PC-9 (cell line): ENCODE measurements at regions of chr11 and their contacts with region 1.

Region 1: GRCh38 chr11:77198440-77198849 is 70.4 kb downstream of the MYO7A start:
- DNase-seq: no peak
- H3K4me3 ChIP-seq: no peak overlapping the region
- H3K27ac ChIP-seq: no peak overlapping the region
- H3K4me1 ChIP-seq: no peaks in the 10 kb centered on the region
- H3K27me3 ChIP-seq: no peaks in the 10 kb centered on the region
- CTCF ChIP-seq: peak; percentile 60

Region 2: GRCh38 chr11:77170107-77170506 is 28.3 kb before region 1 on chr11:
- CTCF ChIA-PET with region 1: no interaction called
- POLR2A ChIA-PET with region 1: no interaction called
- intact Hi-C with region 1: no loop called
- DNase-seq: peak; percentile 73 to 82
- H3K4me3 ChIP-seq: no peak overlapping the region
- H3K27ac ChIP-seq: no peak overlapping the region
- H3K4me1 ChIP-seq: peaks cover 8% of the 10 kb centered on the region; the same call in 1 of the 2 replicates
- H3K27me3 ChIP-seq: peaks cover 26% of the 10 kb centered on the region; the same call in 1 of the 2 replicates
- CTCF ChIP-seq: no peak

Region 3: GRCh38 chr11:77287615-77288273 is 89.3 kb after region 1 on chr11:
- CTCF ChIA-PET with region 1: no interaction called
- POLR2A ChIA-PET with region 1: no interaction called
- intact Hi-C with region 1: no loop called
- DNase-seq: peak; percentile 12 to 58
- H3K4me3 ChIP-seq: no peak overlapping the region
- H3K27ac ChIP-seq: no peak overlapping the region
- H3K4me1 ChIP-seq: peaks cover 8% of the 10 kb centered on the region; the same call in 1 of the 2 replicates
- H3K27me3 ChIP-seq: no peaks in the 10 kb centered on the region
- CTCF ChIP-seq: no peak

Region 4: DNA sequence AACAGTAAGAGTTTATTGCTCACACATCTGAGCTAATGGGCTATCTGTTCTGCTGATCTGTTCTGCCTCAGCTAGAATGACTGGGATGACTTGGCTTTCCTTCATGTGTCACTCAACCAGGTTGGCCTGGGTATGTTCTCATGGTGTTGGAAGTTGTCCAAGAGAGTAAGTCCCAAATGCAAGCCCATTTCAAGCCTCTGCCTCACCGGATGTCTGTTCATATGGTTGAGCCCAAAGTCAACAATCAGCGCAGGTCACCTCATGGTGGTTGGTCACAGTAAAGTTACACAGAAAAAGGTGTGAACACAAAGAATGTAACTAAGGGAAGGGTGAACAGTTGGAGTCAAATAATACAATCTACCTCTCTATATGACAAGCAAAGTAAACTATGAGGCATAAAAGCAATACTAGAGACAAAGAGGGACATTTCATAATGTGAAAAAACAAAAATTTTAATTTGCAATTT is 101.1 kb after region 1 on chr11:
- CTCF ChIA-PET with region 1: interaction called, 4 read pairs
- POLR2A ChIA-PET with region 1: no interaction called
- intact Hi-C with region 1: loop called (anchors 1 kb)
- DNase-seq: peak; percentile 77 to 98
- H3K4me3 ChIP-seq: no peak overlapping the region
- H3K27ac ChIP-seq: peak overlapping the region; percentile 95
- H3K4me1 ChIP-seq: peaks cover 27% of the 10 kb centered on the region
- H3K27me3 ChIP-seq: no peaks in the 10 kb centered on the region
- CTCF ChIP-seq: no peak

Region 5: DNA sequence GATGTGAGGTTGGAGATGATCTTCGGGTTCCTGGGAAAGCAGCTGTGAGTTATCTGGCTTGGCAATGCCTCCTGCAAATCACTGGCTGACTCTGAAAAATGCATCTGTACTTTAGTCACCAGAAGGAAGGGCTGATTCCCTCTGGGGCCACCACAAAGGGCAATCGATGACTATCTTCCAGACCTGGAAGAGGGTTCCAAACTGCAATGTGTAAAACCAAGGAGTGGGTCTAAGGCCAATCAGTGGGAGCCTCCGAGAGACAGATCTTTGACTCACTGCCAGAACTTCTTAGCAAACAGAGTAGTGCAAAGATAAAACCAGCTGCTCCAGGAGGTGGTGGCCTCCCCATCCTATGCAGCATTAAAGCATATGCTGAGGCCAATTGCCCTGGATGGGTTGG is 304.6 kb after region 1 on chr11:
- CTCF ChIA-PET with region 1: no interaction called
- POLR2A ChIA-PET with region 1: no interaction called
- intact Hi-C with region 1: no loop called
- DNase-seq: peak in 1 of 2 experiments; percentile 50
- H3K4me3 ChIP-seq: no peak overlapping the region
- H3K27ac ChIP-seq: no peak overlapping the region
- H3K4me1 ChIP-seq: peaks cover 24% of the 10 kb centered on the region
- H3K27me3 ChIP-seq: peaks cover 64% of the 10 kb centered on the region
- CTCF ChIP-seq: no peak